ENCODE measurements at regions of chr4 and their contacts with region 1.

Region 1: DNA sequence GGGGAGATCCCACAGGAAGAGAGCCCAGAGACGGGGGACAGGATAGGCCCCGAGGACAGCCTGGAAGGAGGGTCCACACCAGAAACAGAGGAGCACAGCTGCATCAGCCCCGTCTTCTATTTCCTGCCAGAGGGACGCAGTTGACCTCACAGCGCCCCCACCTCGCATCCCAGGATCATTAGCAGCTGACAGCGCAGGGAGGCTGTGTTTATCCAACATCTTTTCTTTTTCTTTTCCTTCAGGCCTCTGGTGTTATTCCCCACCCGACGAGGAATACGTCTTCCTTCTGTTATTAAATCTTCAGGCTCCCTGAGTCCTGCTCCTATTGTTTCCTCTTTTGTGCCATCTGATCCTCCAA is 75.4 kb downstream of the DCHS2 start:
- DNase-seq: peak; percentile 25
- H3K4me3 Mint-ChIP-seq: peak overlapping the region; percentile 50
- H3K27ac Mint-ChIP-seq: no peak overlapping the region
- H3K4me1 Mint-ChIP-seq: peaks cover 15% of the 10 kb centered on the region
- H3K27me3 Mint-ChIP-seq: peaks cover 37% of the 10 kb centered on the region

Region 2: DNA sequence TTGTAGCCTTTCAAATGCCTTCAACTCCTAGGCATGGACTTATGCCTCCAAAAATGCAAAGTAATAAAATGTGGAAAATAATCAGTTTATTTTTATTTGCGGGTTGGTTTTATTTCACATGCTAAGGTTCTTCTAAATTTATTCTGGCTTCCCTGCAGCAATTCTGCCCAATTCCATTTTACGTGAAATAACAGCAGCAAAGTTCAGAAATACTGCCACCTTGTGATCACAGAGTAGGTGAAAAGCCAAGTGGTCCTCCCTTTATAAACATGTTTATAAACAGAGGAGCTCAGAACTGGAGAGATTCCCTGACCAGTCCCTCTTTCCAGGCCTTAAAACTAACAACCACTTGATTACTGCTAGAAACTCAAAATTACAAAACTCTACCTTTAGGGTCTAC is 90.1 kb after region 1 on chr4:
- CTCF ChIA-PET with region 1: no interaction called
- intact Hi-C with region 1: loop called (anchors 2 kb)
- DNase-seq: no peak
- H3K4me3 Mint-ChIP-seq: no peak overlapping the region
- H3K27ac Mint-ChIP-seq: no peak overlapping the region
- H3K4me1 Mint-ChIP-seq: no peaks in the 10 kb centered on the region
- H3K27me3 Mint-ChIP-seq: peaks cover 31% of the 10 kb centered on the region